ENCODE measurements at regions of chr11 and their contacts with region 1.

Region 1: DNA sequence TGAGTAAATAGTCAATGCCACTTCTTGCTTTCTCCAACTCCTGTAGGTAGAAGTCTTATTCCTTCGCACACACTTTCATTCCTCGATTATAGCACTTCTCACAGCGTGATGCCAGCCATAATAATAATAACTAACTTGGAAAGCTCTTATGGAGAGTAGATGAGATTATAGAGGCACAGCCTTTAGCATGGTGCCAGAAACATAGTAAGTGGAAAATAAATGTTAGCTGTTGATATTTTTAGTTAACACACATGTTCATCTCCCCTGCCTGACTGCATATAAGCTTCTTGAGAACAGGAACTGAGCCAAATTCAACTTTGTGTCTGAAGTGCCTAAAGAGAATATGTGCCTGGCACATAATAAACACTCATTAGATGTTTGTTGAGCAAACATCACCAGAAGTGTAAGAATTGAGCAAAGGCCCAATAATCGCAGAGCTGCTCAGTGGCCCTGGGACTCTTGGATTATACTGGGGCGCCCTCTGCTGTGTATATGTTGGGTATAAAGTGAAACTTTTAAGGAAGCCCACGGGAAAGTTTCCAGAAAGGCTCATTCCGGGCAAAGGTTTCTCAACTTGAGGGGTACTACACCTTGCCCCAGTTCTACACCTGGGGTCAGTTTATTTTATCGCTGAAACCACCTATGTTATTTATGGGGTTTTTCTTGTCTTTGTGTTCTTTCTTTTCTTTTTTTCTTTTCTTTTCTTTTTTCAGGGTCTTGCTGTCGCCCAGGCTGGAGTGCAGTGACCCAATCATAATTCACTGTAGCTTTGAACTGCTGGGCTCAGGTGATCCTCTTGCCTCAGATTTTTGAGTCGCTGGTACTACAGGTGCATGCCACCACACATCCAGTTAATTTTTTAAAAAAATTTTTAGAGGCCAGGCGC is 22.3 kb downstream of the SLN start:
- DNase-seq: peak in 9 of 10 donors; percentile 32 to 87 (median 63)
- H3K4me3 ChIP-seq: peak overlapping the region in 2 of 59 donors; percentile 14 to 28
- H3K27ac ChIP-seq: no peak overlapping the region
- H3K27me3 ChIP-seq: peaks cover 0 to 41% (median 0%) of the 10 kb centered on the region in 45 donors
- CTCF ChIP-seq: peak; percentile 47 to 92 (median 76)

Region 2: DNA sequence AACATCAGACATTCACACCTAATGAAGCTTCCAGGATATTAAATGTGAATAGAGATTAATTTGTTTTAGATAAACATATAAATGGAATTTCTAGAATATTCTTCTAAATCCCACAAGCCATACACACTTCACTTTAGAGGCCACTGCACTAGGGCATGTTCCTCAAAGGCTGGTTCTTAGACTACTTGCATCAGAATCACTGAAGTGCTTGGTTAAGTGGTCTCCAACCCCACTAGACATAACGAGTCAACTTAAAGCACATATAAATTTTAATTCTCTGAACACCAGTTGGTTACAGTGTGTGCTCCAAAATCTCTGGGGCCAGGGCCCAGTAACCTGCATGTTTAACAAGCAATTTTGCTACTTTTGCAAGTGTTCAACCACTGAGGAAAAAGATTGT is 116.1 kb before region 1 on chr11:
- intact Hi-C with region 1: loop called in 1 of 2 experiments (anchors 5 kb)
- DNase-seq: no peak
- H3K4me3 ChIP-seq: no peak overlapping the region
- H3K27ac ChIP-seq: no peak overlapping the region
- H3K27me3 ChIP-seq: peaks cover 0 to 6% (median 0%) of the 10 kb centered on the region in 45 donors
- CTCF ChIP-seq: no peak

Region 3: GRCh38 chr11:107583629-107584195 is 105.8 kb before region 1 on chr11:
- intact Hi-C with region 1: loop called (anchors 5 kb)
- DNase-seq: no peak
- H3K4me3 ChIP-seq: no peak overlapping the region
- H3K27ac ChIP-seq: no peak overlapping the region
- H3K27me3 ChIP-seq: peaks cover 0 to 11% (median 0%) of the 10 kb centered on the region in 45 donors
- CTCF ChIP-seq: no peak

Region 4: GRCh38 chr11:107646783-107647182 is 42.8 kb before region 1 on chr11:
- intact Hi-C with region 1: no loop called
- DNase-seq: no peak
- H3K4me3 ChIP-seq: no peak overlapping the region
- H3K27ac ChIP-seq: no peak overlapping the region
- H3K27me3 ChIP-seq: no peaks in the 10 kb centered on the region
- CTCF ChIP-seq: no peak

Region 5: DNA sequence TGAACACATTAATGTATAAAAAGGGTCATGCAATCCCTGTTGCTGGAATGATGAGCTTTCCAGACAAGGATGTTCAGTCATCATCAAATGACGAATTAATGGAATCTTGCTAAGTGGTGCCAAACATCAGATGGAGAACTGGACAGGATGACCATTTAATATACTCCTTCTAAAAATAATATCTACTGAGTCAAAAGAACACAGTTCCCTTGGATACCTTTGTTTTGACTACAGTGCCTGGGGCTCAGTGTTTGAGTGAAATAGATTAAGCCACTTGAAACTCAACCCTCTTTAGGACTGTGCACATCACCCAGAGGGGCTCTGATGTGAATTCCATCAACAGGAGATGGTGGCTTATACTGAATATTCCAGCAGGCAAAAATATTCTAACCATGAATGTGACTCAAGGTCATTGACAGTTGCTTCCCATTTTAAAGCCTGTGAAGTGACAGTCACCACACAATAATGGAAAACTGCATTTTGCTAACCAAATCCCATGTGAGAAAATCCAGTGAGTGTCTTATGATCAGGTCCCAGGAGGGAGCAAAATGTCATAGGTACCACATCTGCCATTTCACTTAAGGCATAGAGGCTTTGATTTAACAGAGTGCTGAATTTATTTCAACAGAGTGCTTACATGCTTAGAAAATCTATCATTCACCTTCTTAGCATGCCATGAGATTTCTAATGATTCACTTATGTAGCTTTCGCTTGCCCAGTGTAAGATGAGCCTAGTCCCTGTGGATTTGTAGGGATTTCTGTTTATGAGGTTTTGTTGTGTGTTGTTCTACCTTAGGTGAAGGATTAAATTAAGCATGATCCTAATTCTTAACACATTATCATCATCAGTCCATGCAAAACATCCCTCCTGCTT is 63.6 kb after region 1 on chr11:
- intact Hi-C with region 1: no loop called
- DNase-seq: no peak
- H3K4me3 ChIP-seq: no peak overlapping the region
- H3K27ac ChIP-seq: no peak overlapping the region
- H3K27me3 ChIP-seq: peaks cover 0 to 8% (median 0%) of the 10 kb centered on the region in 45 donors
- CTCF ChIP-seq: no peak

Region 6: DNA sequence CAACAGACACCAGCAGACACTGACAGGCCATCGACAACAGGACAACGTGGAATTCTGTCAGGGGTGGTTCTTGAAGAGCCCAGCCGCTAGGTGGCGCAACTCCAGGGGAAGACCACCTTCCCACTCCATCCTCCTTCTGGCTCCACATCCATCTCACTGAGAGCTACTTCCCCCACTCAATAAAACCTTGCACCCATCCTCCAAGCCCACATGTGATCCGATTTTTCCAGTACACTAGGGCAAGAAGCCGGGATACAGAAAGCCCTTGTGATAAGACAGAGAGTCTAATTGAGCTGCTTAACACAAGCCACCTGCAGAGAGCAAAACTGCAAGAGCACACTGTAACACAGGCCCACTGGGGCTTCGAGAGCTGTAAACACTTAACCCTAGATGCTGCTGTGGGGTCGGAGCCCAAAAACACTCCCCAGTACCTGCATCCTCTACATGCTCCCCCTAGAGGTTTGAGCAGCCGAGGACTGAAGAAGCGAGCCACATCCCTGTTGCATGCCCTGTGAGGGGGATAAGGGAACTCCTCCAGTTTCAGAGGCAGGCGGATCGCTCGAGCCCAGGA is 227.2 kb after region 1 on chr11:
- intact Hi-C with region 1: no loop called
- DNase-seq: no peak
- H3K4me3 ChIP-seq: no peak overlapping the region
- H3K27ac ChIP-seq: no peak overlapping the region
- H3K27me3 ChIP-seq: peaks cover 0 to 8% (median 0%) of the 10 kb centered on the region in 45 donors
- CTCF ChIP-seq: peak in 47 of 56 donors; percentile 10 to 64 (median 40)